SK-N-SH (cell line): ENCODE measurements at regions of chr14 and their contacts with region 1.

Region 1: GRCh38 chr14:74612350-74613021 is 449 bp upstream of the LTBP2 start:
- DNase-seq: peak; percentile 95
- H3K4me3 ChIP-seq: peak overlapping the region; percentile 68 to 73
- H3K27ac ChIP-seq: peak overlapping the region; percentile 75 to 99
- H3K4me1 ChIP-seq: peaks cover 17 to 37% of the 10 kb centered on the region in 2 experiments; a peak in 3 of 4 replicates
- H3K27me3 ChIP-seq: no peaks in the 10 kb centered on the region
- CTCF ChIP-seq: peak; percentile 63
- EP300 ChIP-seq: peak in 1 of 2 experiments; percentile 38; a peak in 1 of 4 replicates
- RAD21 ChIP-seq: peak; percentile 54

Region 2: GRCh38 chr14:74524076-74524811 is 88.2 kb before region 1 on chr14:
- CTCF ChIA-PET with region 1: interaction called, 22 read pairs
- POLR2A ChIA-PET with region 1: no interaction called
- DNase-seq: no peak
- H3K4me3 ChIP-seq: no peak overlapping the region
- H3K27ac ChIP-seq: no peak overlapping the region
- H3K4me1 ChIP-seq: no peaks in the 10 kb centered on the region; a peak in 1 of 4 replicates
- H3K27me3 ChIP-seq: no peaks in the 10 kb centered on the region
- CTCF ChIP-seq: no peak
- EP300 ChIP-seq: no peak
- RAD21 ChIP-seq: no peak

Region 3: GRCh38 chr14:74558655-74559054 is 53.8 kb before region 1 on chr14:
- CTCF ChIA-PET with region 1: interaction called, 40 read pairs
- POLR2A ChIA-PET with region 1: no interaction called
- DNase-seq: no peak
- H3K4me3 ChIP-seq: no peak overlapping the region
- H3K27ac ChIP-seq: no peak overlapping the region
- H3K4me1 ChIP-seq: peaks cover 12 to 27% of the 10 kb centered on the region in 2 experiments; a peak in 3 of 4 replicates
- H3K27me3 ChIP-seq: no peaks in the 10 kb centered on the region
- CTCF ChIP-seq: no peak
- EP300 ChIP-seq: no peak
- RAD21 ChIP-seq: no peak

Region 4: DNA sequence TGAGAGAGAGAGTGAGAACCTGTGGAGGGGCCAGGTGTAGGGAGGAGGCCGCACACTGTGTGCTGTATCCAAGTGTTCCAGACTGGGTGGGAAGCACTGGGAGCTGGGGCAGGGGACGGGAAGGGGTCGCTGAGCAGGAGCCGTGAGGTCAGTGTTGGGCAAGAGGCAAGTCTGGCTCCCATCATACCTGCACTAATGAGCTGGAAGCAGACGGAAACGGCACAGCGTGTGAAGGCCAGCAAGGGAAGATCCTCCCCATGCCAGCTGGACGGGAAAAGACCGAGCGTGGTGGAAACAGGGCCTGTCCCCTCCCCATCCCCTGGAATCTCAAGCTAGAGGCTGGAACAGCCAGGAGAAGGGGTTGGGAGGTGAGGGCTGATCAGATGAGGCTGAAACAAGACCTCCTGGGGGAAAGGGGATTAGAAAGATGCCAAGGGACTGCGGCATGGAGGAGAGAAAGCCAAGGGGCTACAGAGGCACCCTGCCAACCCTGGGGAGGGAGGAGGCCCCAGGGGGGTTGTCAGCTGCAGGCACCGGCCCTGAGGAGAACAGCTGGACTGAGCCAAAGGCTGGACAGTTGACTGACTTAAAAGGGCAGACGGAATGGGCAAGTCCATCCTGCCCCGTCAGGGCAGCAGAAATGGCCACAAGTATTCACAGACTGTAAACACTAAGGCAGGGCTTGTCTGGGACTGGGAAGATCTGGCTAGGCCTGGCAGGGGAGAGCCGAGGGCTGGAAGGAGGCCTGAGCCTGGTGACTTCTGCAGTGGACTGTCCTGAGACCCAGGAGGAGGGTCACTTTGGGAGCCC is 18.6 kb after region 1 on chr14:
- CTCF ChIA-PET with region 1: interaction called, 84 read pairs
- POLR2A ChIA-PET with region 1: no interaction called
- DNase-seq: no peak
- H3K4me3 ChIP-seq: no peak overlapping the region
- H3K27ac ChIP-seq: no peak overlapping the region
- H3K4me1 ChIP-seq: peaks cover 0 to 15% of the 10 kb centered on the region in 2 experiments; a peak in 1 of 4 replicates
- H3K27me3 ChIP-seq: no peaks in the 10 kb centered on the region
- CTCF ChIP-seq: no peak
- EP300 ChIP-seq: no peak
- RAD21 ChIP-seq: no peak

Region 5: DNA sequence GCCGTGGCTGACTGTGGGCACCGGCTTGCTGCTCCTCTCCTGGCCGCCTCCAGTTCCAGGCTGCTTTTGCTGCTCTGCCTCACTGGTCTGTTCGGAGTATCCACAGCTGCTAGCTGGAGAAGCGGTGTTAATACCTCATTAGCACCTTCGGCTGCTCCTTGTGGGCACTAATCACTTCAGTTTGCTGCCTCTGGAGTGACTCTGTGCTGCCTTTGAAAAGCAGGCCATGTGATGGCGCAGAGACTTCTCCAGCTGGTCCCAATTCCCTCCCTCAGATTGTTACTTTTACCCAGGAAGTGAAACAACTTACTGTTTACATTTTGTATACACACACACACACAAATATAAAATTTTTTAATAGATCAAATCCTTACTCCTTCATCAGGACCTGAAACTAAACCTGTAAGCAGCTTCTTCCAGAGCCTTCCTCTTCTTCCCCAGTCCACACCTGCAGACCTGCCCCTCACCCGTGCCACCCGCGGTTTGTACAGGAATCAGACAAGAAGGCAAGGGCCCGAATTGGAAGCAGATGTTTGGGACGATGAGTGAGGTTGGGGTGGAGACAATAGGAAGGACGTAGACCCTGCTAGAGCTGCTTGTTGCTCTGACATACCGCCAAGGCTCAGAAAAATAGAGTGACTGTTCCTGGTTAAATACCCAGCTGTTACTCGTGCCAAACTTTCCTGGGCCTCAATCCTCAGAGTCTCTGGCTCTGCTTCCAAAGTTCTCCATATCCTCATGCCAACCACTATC is 41.1 kb after region 1 on chr14:
- CTCF ChIA-PET with region 1: interaction called, 17 read pairs
- POLR2A ChIA-PET with region 1: no interaction called
- DNase-seq: no peak
- H3K4me3 ChIP-seq: no peak overlapping the region
- H3K27ac ChIP-seq: no peak overlapping the region
- H3K4me1 ChIP-seq: peaks cover 19 to 41% of the 10 kb centered on the region in 2 experiments; a peak in 3 of 4 replicates
- H3K27me3 ChIP-seq: no peaks in the 10 kb centered on the region
- CTCF ChIP-seq: no peak
- EP300 ChIP-seq: no peak
- RAD21 ChIP-seq: no peak